CD8-positive, alpha-beta T cell (primary cell): ENCODE measurements at regions of chr9 and their contacts with region 1.

Region 1: GRCh38 chr9:122125158-122125508 is 32.0 kb upstream of the TTLL11 start:
- DNase-seq: peak; percentile 62 to 87 (median 76)
- ATAC-seq: peak; percentile 83
- H3K4me3 ChIP-seq: no peak overlapping the region
- H3K4me3 Mint-ChIP-seq: peak overlapping the region; percentile 33
- H3K27ac ChIP-seq: no peak overlapping the region
- H3K27ac Mint-ChIP-seq: no peak overlapping the region
- H3K4me1 ChIP-seq: peaks cover 18% of the 10 kb centered on the region
- H3K4me1 Mint-ChIP-seq: peaks cover 21% of the 10 kb centered on the region
- H3K27me3 ChIP-seq: peaks cover 12 to 16% of the 10 kb centered on the region in 2 experiments
- H3K27me3 Mint-ChIP-seq: peaks cover 31% of the 10 kb centered on the region
- CTCF ChIP-seq: peak; percentile 82

Region 2: DNA sequence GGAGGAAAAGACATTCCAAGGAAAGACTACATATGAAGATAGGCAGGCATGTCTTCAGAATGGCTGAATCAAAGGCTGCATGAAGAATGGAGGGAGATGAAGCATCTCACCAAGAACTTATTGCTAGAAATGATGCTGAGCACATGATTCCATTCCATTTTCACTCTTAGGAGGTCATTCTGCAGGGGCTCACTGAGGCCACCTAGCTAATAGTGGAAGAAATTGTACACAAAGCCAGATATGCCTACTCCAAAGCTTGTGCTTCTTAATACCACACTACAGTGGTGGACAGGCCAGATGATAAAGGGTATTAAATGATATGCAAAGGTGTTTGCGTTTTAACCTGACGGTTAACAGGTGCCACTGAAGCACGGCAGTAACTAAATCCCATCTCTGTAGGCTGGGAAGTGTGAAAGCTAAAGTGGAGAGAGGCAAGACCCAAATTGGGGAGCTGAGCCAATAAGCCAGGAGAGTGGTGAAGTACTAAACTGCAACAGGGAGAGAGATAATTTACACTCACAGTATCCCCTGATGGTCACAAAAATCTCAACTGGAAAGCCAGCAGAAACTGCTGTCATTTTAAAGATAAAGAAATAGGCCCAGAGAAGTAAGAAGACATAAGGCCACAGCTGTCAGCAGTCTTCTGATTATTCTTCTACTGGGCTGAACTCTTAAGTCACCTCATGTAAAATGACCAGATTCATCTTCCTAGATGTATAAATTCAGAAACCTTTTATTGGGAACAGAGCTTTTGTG is 19.9 kb after region 1 on chr9:
- CTCF ChIA-PET with region 1: interaction called, 61 read pairs
- POLR2A ChIA-PET with region 1: no interaction called
- intact Hi-C with region 1: no loop called
- DNase-seq: no peak
- ATAC-seq: no peak
- H3K4me3 ChIP-seq: no peak overlapping the region
- H3K4me3 Mint-ChIP-seq: no peak overlapping the region
- H3K27ac ChIP-seq: no peak overlapping the region
- H3K27ac Mint-ChIP-seq: peak overlapping the region; percentile 69
- H3K4me1 ChIP-seq: no peaks in the 10 kb centered on the region
- H3K4me1 Mint-ChIP-seq: peaks cover 3% of the 10 kb centered on the region
- H3K27me3 ChIP-seq: no peaks in the 10 kb centered on the region
- H3K27me3 Mint-ChIP-seq: no peaks in the 10 kb centered on the region
- CTCF ChIP-seq: no peak

Region 3: DNA sequence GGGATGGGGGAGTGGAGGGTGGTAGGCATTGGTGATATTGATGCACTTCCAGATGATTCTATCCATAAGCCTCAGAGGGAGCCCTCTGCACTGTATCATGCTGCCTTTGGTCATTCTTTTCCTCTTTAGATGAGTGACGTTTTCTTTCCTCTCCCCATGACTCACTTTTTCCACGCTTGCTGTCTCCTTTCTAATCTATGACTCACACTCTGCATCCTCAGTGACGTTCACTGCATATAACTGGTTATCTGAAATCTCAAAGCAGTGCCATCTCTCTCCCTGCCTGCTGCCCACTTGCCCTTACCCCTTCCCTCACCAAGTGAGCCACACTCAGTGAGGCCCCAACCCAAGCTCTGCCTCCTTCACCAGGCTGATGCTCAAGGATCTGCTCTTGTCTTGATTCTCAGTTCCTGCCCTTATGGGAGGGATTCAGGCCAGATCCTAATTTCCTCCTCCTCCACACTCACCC is 277.3 kb after region 1 on chr9:
- CTCF ChIA-PET with region 1: no interaction called
- POLR2A ChIA-PET with region 1: no interaction called
- intact Hi-C with region 1: no loop called
- DNase-seq: no peak
- ATAC-seq: no peak
- H3K4me3 ChIP-seq: no peak overlapping the region
- H3K4me3 Mint-ChIP-seq: no peak overlapping the region
- H3K27ac ChIP-seq: no peak overlapping the region
- H3K27ac Mint-ChIP-seq: no peak overlapping the region
- H3K4me1 ChIP-seq: no peaks in the 10 kb centered on the region
- H3K4me1 Mint-ChIP-seq: no peaks in the 10 kb centered on the region
- H3K27me3 ChIP-seq: no peaks in the 10 kb centered on the region
- H3K27me3 Mint-ChIP-seq: peaks cover 3% of the 10 kb centered on the region
- CTCF ChIP-seq: no peak

Region 4: DNA sequence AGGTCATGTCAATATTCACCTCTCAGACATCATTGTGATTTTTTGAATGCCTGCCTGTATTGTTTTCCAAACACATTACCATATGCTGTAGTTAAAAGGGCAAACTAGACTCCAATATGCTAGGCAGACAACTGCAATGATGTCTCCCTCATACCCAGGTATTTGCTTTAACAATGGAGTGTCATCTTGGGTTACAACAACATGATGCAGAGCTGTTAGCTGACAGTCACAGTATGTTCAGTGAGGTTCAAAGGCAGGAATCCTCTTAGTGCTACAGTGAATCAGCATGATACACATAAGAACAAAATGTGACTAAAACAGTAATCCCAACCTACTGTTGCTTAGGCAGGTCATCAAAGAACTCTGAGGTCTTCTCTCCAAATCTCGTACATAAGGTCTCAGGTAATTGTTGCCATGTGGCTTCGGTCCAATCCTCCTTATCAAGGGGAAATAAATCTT is 328.6 kb after region 1 on chr9:
- CTCF ChIA-PET with region 1: no interaction called
- POLR2A ChIA-PET with region 1: no interaction called
- intact Hi-C with region 1: loop called in 1 of 2 experiments (anchors 10 kb)
- DNase-seq: no peak
- ATAC-seq: no peak
- H3K4me3 ChIP-seq: no peak overlapping the region
- H3K4me3 Mint-ChIP-seq: no peak overlapping the region
- H3K27ac ChIP-seq: no peak overlapping the region
- H3K27ac Mint-ChIP-seq: no peak overlapping the region
- H3K4me1 ChIP-seq: no peaks in the 10 kb centered on the region
- H3K4me1 Mint-ChIP-seq: no peaks in the 10 kb centered on the region
- H3K27me3 ChIP-seq: no peaks in the 10 kb centered on the region
- H3K27me3 Mint-ChIP-seq: peaks cover 16% of the 10 kb centered on the region
- CTCF ChIP-seq: no peak